Common myeloid progenitor, CD34-positive (primary cell): ENCODE measurements at regions of chr18 and their contacts with region 1.

Region 1: DNA sequence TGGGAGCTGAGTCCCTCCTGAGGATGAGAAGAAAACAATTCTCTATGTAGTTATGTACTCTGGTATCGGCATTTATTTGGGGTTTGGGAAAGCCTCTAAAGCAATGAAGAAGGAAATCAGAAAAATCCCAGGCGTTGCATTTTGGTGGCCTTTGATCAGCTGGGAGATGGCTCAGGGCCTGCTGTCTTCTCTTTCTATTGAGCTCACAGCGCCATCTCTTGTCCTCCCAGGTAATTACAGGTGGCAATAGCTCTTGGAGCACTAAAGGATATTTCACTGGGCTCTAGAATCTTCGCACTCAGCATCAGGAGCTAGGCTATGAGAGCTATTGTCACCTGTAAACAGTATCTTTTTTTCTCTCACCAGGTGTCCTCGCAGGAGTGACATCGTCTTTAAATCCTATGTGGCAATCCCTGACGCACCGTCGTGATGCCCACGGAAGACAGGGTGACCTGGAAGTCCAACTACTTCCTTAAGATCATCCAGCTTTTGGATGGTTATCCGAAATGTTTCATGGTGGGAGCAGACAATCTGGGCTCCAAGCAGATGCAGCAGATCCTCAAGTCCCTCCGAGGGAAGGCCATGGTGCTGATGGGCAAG is 76.1 kb upstream of the PMAIP1 start:
- DNase-seq: peak; percentile 48 to 65 (median 59)
- H3K4me3 ChIP-seq: no peak overlapping the region
- H3K27ac ChIP-seq: no peak overlapping the region
- H3K4me1 ChIP-seq: no peaks in the 10 kb centered on the region
- H3K27me3 ChIP-seq: peaks cover 0 to 2% (median 0%) of the 10 kb centered on the region in 5 experiments

Region 2: DNA sequence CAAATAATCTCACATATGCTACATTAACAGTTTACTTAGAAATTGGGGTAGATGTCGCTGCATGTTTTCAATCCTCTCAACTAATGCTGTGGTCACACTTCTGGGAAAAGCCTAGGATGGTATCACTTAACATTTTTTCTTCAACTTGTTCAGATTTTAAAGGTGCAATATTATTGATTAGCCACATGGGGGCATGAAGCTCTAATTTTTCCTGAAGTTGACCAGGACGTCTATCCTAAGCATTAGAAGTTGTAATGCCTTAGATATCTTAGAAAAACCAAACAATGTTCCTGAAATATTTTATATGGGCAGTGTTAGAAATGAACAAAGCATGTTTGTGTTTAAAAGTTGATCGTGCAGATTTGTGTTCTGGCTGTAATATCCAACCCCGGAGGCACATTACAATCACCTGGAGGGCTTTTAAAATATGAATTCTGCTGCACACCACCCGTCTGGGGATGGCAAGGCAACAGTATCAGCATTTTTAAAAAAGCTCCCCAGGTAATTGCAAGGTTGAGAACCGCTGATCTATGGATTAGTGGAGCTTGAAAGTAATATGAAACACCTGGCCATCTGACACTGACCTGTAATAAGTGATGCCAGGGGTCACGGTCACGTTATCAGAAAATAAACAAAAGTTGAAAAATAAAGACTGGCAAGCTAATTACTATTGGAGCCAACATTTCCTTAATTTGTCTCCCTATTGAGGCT is 364.2 kb before region 1 on chr18:
- CTCF ChIA-PET with region 1: interaction called, 82 read pairs
- POLR2A ChIA-PET with region 1: no interaction called
- DNase-seq: peak; percentile 1 to 26 (median 16)
- H3K4me3 ChIP-seq: no peak overlapping the region
- H3K27ac ChIP-seq: no peak overlapping the region
- H3K4me1 ChIP-seq: no peaks in the 10 kb centered on the region
- H3K27me3 ChIP-seq: peaks cover 0 to 18% (median 0%) of the 10 kb centered on the region in 5 experiments

Region 3: GRCh38 chr18:59631583-59632181 is 192.0 kb before region 1 on chr18:
- CTCF ChIA-PET with region 1: interaction called, 18 read pairs
- POLR2A ChIA-PET with region 1: no interaction called
- DNase-seq: peak; percentile 1 to 23 (median 15)
- H3K4me3 ChIP-seq: no peak overlapping the region
- H3K27ac ChIP-seq: no peak overlapping the region
- H3K4me1 ChIP-seq: no peaks in the 10 kb centered on the region
- H3K27me3 ChIP-seq: peaks cover 0 to 2% (median 0%) of the 10 kb centered on the region in 5 experiments